Activated CD4-positive, alpha-beta memory T cell treated with anti-CD3 and anti-CD28 coated beads for 36 hours (primary cell): ENCODE measurements at regions of chr12 and their contacts with region 1.

Region 1: GRCh38 chr12:118372541-118373495 is at the start of gene TAOK3:
- DNase-seq: peak; percentile 99
- H3K4me3 Mint-ChIP-seq: peak within 1 kb of the TSS; percentile 90
- H3K27ac Mint-ChIP-seq: peak within 1 kb of the TSS; percentile 95
- H3K4me1 Mint-ChIP-seq: peaks cover 43% of the 10 kb centered on the region
- H3K27me3 Mint-ChIP-seq: no peaks in the 10 kb centered on the region
- total RNA-seq, gene TAOK3: 47.5 to 50.4 TPM

Region 2: GRCh38 chr12:117874842-117875434 is 497.9 kb before region 1 on chr12:
- CTCF ChIA-PET with region 1: interaction called, 17 read pairs
- POLR2A ChIA-PET with region 1: no interaction called
- intact Hi-C with region 1: loop called (anchors 2 kb)
- DNase-seq: peak; percentile 85
- H3K4me3 Mint-ChIP-seq: no peak overlapping the region
- H3K27ac Mint-ChIP-seq: no peak overlapping the region
- H3K4me1 Mint-ChIP-seq: peaks cover 14% of the 10 kb centered on the region
- H3K27me3 Mint-ChIP-seq: peaks cover 13% of the 10 kb centered on the region

Region 3: GRCh38 chr12:118120579-118121363 is 252.0 kb before region 1 on chr12:
- CTCF ChIA-PET with region 1: interaction called, 44 read pairs
- POLR2A ChIA-PET with region 1: interaction called, 4 read pairs
- intact Hi-C with region 1: loop called (anchors 1 kb)
- DNase-seq: peak; percentile 81
- H3K4me3 Mint-ChIP-seq: no peak overlapping the region
- H3K27ac Mint-ChIP-seq: peak overlapping the region; percentile 20
- H3K4me1 Mint-ChIP-seq: peaks cover 11% of the 10 kb centered on the region
- H3K27me3 Mint-ChIP-seq: no peaks in the 10 kb centered on the region

Region 4: GRCh38 chr12:118175823-118176447 is 196.9 kb before region 1 on chr12:
- CTCF ChIA-PET with region 1: interaction called, 113 read pairs
- POLR2A ChIA-PET with region 1: no interaction called
- intact Hi-C with region 1: no loop called
- DNase-seq: no peak
- H3K4me3 Mint-ChIP-seq: no peak overlapping the region
- H3K27ac Mint-ChIP-seq: no peak overlapping the region
- H3K4me1 Mint-ChIP-seq: no peaks in the 10 kb centered on the region
- H3K27me3 Mint-ChIP-seq: no peaks in the 10 kb centered on the region

Region 5: DNA sequence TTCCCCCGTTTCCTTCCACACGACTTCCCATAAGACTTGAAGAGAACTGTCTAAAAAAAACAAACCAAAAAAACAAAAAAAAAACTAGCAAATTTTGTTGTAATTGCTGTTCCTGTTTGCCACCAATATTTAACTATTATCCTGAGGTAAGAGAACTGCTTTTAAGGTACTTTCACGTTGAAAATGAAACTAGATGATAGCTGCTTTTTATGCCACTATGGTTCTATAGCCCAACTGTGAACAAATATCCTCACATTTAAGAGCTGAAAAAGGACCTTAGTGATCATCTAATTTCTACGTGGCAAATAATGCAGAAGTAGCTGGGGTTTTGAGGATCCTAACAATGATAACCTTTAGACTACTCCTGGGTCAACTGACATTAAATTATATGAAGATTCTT is 98.8 kb before region 1 on chr12:
- CTCF ChIA-PET with region 1: interaction called, 11 read pairs
- POLR2A ChIA-PET with region 1: interaction called, 3 read pairs
- intact Hi-C with region 1: no loop called
- DNase-seq: no peak
- H3K4me3 Mint-ChIP-seq: no peak overlapping the region
- H3K27ac Mint-ChIP-seq: no peak overlapping the region
- H3K4me1 Mint-ChIP-seq: peaks cover 9% of the 10 kb centered on the region
- H3K27me3 Mint-ChIP-seq: no peaks in the 10 kb centered on the region

Region 6: DNA sequence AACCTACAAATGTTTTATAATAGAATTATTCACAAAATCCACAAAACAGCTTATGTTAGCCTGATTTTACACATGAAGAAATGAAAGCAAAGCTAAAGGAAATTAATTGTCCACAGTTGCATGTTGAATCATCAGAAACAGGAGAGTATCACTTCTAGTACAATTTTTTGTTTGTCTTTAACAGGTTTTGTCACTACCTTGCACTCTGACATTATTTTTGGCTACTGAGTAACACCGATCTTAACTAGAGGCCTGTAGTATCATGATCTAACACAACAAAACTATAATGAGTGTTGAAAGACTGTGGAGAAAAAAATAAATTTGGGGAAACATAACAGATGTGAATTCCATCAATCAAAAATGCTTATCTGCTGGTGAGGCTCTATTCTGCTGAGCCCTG is 60.2 kb before region 1 on chr12:
- CTCF ChIA-PET with region 1: interaction called, 35 read pairs
- POLR2A ChIA-PET with region 1: interaction called, 7 read pairs
- intact Hi-C with region 1: loop called (anchors 1 kb)
- DNase-seq: no peak
- H3K4me3 Mint-ChIP-seq: peak overlapping the region; percentile 2
- H3K27ac Mint-ChIP-seq: peak overlapping the region; percentile 64
- H3K4me1 Mint-ChIP-seq: peaks cover 44% of the 10 kb centered on the region
- H3K27me3 Mint-ChIP-seq: no peaks in the 10 kb centered on the region

Region 7: GRCh38 chr12:118330421-118331018 is 42.3 kb before region 1 on chr12:
- CTCF ChIA-PET with region 1: no interaction called
- POLR2A ChIA-PET with region 1: no interaction called
- intact Hi-C with region 1: no loop called
- DNase-seq: no peak
- H3K4me3 Mint-ChIP-seq: no peak overlapping the region
- H3K27ac Mint-ChIP-seq: no peak overlapping the region
- H3K4me1 Mint-ChIP-seq: peaks cover 39% of the 10 kb centered on the region
- H3K27me3 Mint-ChIP-seq: no peaks in the 10 kb centered on the region

Region 8: GRCh38 chr12:118467641-118468305 is 95.0 kb after region 1 on chr12:
- CTCF ChIA-PET with region 1: no interaction called
- POLR2A ChIA-PET with region 1: no interaction called
- intact Hi-C with region 1: no loop called
- DNase-seq: no peak
- H3K4me3 Mint-ChIP-seq: no peak overlapping the region
- H3K27ac Mint-ChIP-seq: no peak overlapping the region
- H3K4me1 Mint-ChIP-seq: no peaks in the 10 kb centered on the region
- H3K27me3 Mint-ChIP-seq: peaks cover 5% of the 10 kb centered on the region